K562 (cell line): ENCODE measurements at regions of chr2 and their contacts with region 1.

Region 1: DNA sequence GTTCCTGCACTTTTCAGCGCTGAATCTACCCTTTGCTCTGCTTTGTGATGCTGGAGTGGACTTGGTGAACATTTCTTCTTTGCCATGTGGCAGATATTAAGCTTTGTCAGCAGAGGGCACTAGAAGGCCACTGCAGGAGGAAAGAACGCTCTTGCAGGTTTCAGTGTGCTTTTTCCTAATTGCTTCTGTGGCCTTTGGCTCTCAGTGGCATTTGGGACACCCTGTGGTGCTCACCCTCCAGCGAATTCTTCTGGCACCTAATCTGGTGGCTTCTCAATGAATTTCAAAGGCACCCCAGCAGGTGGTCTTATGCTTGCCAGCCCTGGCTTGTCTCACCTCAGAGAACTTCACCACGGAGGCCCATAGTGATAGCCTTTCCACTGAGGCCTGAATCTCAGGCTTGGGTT is 146.7 kb downstream of the MYO3B start:
- DNase-seq: peak; percentile 42 to 85 (median 60)
- ATAC-seq: peak; percentile 95
- H3K4me3 ChIP-seq: no peak overlapping the region
- H3K27ac ChIP-seq: no peak overlapping the region
- H3K4me1 ChIP-seq: peaks cover 0 to 22% of the 10 kb centered on the region in 2 experiments; a peak in 4 of 5 replicates
- H3K27me3 ChIP-seq: no peaks in the 10 kb centered on the region
- CTCF ChIP-seq: peak; percentile 93 to 95 (median 93)
- EP300 ChIP-seq: peak; percentile 45; the same call in 1 of the 2 replicates
- POLR2A ChIP-seq: no peak
- RAD21 ChIP-seq: peak; percentile 99

Region 2: DNA sequence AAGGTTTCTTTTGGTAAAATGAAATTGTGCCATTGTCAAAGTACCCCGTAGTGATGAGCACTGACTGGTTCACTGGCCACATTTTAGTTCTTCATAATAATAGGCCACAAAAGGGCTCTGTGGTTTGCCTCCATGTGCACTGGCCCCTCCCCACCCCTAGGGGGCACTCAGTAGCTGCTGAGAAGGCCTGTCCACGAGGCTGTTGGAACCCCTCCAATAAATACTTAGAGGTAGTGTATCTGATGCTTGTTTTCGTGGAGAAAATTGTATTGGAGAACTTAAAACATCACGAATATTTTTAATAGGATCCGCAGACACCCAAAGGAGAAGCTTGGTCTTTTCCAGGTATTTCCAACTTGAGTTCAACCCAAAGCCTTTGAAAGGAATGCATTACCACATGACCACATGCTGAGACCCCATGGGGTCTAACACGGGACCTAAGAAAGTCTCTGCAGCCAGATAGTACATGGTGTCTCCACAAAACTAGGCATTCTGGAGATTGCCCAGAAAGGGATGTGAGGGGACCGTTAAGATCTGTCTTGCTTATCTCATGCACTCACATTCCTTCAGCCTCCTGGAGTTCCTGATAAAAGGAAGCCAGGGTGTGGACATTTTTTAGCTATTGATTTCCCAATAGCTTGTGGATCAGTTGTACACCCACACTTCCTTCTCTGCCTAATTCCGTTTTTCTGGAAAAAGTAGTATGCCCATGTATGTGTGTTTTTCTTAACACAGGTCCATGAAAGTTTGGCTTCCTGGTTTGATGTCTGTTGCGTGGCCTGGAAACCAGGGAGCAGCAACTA is 1550.7 kb before region 1 on chr2:
- CTCF ChIA-PET with region 1: no interaction called
- POLR2A ChIA-PET with region 1: no interaction called
- in situ Hi-C with region 1: no loop called
- intact Hi-C with region 1: no loop called
- DNase-seq: peak; percentile 84 to 97 (median 90)
- ATAC-seq: peak; percentile 95
- H3K4me3 ChIP-seq: peak overlapping the region; percentile 10; the same call in 1 of the 2 replicates
- H3K27ac ChIP-seq: peak overlapping the region; percentile 89
- H3K4me1 ChIP-seq: peaks cover 2 to 48% of the 10 kb centered on the region in 2 experiments; a peak in 4 of 5 replicates
- H3K27me3 ChIP-seq: no peaks in the 10 kb centered on the region
- CTCF ChIP-seq: peak; percentile 91 to 100 (median 99)
- EP300 ChIP-seq: peak; percentile 100
- POLR2A ChIP-seq: no peak
- RAD21 ChIP-seq: peak; percentile 97 to 99

Region 3: DNA sequence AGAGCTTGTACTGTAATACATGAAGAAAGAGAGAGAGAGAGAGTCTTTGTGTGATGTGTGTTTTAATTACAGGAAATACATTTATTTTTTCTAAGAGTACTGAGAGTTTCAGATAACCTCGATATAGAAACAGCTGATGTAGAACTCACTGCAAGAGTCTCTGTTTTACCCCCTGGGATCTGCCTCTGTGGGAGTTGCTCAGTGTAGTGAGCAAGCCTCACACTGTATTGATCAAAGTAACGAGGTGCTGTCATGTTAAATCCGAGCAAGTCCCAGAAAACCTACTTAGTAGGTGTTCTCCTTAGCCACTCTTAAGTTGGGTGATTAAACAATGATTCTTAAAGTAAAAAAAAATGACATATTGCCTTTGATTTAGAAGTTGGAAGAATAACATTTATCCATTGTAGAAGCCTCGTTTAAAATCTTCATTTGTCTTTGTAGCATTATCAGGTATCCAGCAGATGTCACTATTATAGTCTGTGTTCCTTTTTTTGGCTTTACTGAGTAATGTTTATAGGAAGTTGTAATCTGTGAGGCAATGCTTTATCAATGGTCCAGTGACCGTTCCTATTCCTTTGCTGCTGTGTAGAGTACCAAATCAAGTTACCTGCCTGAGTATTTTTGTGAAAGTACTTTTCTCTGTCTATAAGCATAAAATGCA is 72.3 kb after region 1 on chr2:
- CTCF ChIA-PET with region 1: no interaction called
- POLR2A ChIA-PET with region 1: no interaction called
- in situ Hi-C with region 1: no loop called
- intact Hi-C with region 1: loop called (anchors 2 kb)
- DNase-seq: peak in 2 of 4 experiments; percentile 37 to 39
- ATAC-seq: peak; percentile 77
- H3K4me3 ChIP-seq: no peak overlapping the region
- H3K27ac ChIP-seq: no peak overlapping the region
- H3K4me1 ChIP-seq: peaks cover 0 to 9% of the 10 kb centered on the region in 2 experiments; a peak in 1 of 5 replicates
- H3K27me3 ChIP-seq: no peaks in the 10 kb centered on the region
- CTCF ChIP-seq: peak; percentile 42 to 71 (median 48); a peak in 4 of 6 replicates
- EP300 ChIP-seq: no peak
- POLR2A ChIP-seq: no peak
- RAD21 ChIP-seq: peak; percentile 70 to 83

Region 4: DNA sequence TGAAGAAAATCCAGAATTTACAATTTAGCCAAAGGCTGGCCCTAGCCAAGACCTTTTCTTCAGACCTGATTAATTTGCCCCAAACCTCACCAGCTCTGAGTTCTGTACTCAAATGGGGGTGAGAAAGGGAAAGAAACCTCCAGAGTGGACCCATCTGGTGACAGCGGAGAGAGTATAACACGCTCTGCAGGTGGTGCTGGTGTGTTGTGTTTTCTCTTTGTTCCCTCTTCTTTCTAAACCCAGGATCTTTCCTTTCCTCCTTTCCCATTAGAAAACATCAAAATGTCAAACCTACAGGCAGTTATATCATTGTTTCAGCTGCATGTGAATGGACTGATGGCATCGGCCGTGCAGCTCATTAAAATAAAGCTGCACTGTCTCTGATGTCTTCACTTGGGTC is 137.2 kb after region 1 on chr2:
- CTCF ChIA-PET with region 1: no interaction called
- POLR2A ChIA-PET with region 1: no interaction called
- in situ Hi-C with region 1: no loop called
- intact Hi-C with region 1: loop called (anchors 5 kb)
- DNase-seq: no peak
- ATAC-seq: peak; percentile 63
- H3K4me3 ChIP-seq: no peak overlapping the region
- H3K27ac ChIP-seq: no peak overlapping the region
- H3K4me1 ChIP-seq: peaks cover 0 to 6% of the 10 kb centered on the region in 2 experiments; a peak in 2 of 5 replicates
- H3K27me3 ChIP-seq: no peaks in the 10 kb centered on the region
- CTCF ChIP-seq: peak in 2 of 3 experiments; percentile 17 to 38; a peak in 2 of 6 replicates
- EP300 ChIP-seq: no peak
- POLR2A ChIP-seq: no peak
- RAD21 ChIP-seq: peak in 1 of 2 experiments; percentile 58; a peak in 2 of 4 replicates